Cardiac septum (tissue), 1 donor: ENCODE measurements at regions of chr2 and their contacts with region 1.

Region 1: DNA sequence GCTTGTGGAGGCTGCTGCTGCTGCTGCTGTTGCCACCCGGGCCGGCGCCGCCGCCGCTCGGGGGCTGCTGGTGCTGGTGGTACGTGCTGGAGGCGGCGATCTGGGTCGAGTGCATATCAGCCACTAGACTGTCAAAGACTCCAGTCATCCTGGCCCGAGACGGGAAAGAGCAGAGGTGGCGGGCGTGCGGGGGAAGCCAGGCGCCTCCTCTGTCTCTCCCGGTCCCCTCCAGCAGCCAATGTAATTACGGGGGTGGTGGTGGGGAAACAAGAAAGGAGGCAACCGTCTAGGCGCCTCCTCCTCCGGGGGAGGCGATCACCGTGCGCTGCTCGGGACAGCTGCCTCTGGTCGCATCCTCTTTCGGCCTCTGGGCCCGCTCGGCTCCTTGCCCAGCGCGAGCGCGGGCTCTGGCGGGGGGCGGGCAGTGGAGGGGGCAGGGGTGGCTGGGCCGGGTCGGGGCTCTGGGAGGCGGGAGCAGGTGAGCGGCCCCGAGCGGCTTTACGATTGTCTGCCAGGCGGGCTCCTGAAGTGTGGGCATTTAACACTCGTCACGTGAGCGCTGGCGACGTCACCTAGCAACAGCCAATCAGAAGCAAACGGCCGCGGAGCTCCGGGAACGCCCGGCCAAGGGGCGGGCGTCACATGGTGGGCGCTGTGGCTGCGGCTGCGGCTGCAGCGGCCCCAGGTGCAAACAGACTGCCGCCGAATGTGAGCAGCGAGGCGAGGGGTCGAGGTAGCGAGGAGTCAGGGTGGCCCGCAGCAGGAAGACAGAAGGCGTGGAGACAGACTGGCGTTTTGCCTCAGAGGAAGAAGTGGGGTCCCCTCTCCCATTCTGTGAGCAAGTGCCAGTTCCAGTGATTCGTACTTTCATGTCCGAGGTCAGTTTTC is at the start of gene DLX2:
- DNase-seq: peak; percentile 93
- total RNA-seq, gene DLX2: not detected

Region 2: GRCh38 chr2:171598713-171599319 is 503.8 kb before region 1 on chr2:
- intact Hi-C with region 1: loop called (anchors 10 kb)
- DNase-seq: no peak

Region 3: DNA sequence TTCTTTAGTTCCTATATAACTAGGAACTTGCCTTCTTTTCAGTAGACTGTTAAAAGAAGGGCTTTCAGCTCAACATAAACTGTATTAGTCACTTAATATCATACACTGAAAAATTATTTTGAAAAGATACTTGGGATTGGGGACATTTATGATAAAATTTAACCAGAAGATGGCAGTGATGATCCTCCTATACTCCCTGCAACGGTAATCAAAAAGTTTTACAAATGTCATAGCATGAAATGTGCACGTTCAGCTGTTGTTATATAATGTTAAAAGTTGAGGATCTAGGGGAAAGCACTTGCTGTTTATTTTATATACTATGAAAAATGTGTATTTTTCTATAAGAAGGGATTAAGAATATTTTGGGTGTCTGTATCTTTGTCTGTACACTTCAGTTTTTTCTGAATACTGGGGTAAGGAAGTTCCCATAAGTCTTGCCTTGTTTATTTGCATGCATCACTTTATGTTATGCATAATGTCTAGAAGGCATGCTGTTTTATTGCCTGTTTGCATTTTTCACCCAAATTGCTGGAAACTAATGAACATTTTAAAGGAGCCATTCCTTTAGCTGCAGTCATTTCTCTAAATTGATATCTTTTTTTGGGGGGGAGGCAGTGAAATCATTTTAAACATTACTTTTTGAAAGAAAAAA is 396.4 kb before region 1 on chr2:
- intact Hi-C with region 1: loop called (anchors 5 kb)
- DNase-seq: no peak

Region 4: GRCh38 chr2:171793691-171794678 is 308.6 kb before region 1 on chr2:
- intact Hi-C with region 1: no loop called
- DNase-seq: no peak

Region 5: DNA sequence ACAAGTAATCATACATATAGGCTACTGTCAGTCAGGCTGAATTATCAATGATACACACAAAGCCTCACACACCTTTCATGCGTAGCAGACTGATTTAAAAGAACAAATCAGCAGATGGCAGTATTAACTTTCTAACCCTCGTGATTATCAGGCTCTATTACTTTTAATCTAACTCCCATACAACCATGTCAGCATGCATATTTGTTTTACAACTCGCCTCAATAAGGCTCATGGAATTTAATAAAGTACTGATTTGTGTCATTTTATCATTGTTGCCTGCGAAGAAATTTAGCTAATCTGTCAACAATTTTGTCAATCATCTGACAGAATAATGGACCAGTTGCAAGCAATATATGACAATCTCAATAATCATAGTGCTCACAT is 291.4 kb before region 1 on chr2:
- intact Hi-C with region 1: loop called (anchors 5 kb)
- DNase-seq: no peak

Region 6: GRCh38 chr2:172031536-172031935 is 71.1 kb before region 1 on chr2:
- intact Hi-C with region 1: no loop called
- DNase-seq: no peak

Region 7: GRCh38 chr2:172137943-172138342 is 35.3 kb after region 1 on chr2:
- intact Hi-C with region 1: no loop called
- DNase-seq: no peak